GM10248 (cell line): ENCODE measurements at regions of chr1 and their contacts with region 1.

Region 1: DNA sequence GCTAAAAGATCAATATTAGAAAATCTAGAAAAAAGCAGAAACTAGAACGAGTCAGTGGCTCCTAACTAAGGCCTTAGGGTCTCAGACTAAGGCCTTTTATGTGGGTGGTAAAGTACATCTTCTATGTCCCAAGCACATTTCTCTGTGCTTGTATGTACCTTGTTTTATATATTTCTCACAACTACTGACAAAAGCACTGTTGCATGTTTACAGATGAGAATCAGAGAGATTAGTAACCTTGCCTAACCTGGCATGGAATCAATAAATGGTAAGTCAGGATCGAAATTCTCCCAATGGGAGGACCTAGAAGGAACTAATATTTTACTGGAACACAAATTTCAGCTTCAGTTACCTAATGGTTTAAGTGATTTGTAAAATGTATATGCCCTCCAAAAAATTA is 160.9 kb downstream of the FGGY start:
- DNase-seq: no peak
- CTCF ChIP-seq: no peak

Region 2: GRCh38 chr1:59446257-59446901 is 11.4 kb before region 1 on chr1:
- CTCF ChIA-PET with region 1: interaction called, 13 read pairs
- POLR2A ChIA-PET with region 1: no interaction called
- DNase-seq: no peak
- CTCF ChIP-seq: no peak

Region 3: DNA sequence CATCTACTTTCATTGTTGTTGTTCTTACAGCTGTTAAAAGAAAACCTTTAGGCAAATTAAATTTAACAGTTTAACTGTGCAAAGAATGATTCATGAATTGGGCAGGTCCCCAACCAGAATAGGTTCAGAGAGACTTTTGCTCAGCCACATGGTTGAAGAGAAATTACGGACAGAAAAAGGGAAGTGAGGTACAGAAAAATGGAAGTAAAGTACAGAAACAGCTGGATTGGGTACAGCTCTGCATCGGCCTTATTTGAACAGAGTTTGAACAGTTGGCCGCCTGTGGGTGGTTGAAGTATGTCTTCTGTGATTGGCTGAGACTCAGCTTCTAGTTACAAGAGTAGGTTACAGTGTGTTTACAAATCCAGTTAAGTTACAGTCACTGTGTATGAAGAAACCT is 49.2 kb after region 1 on chr1:
- CTCF ChIA-PET with region 1: no interaction called
- POLR2A ChIA-PET with region 1: no interaction called
- DNase-seq: peak; percentile 31
- CTCF ChIP-seq: no peak